HEK293 (cell line): ENCODE measurements at regions of chr20 and their contacts with region 1.

Region 1: GRCh38 chr20:19995220-19995863 is 21.8 kb upstream of the NAA20 start:
- H3K4me3 ChIP-seq: no peak overlapping the region
- H3K27ac ChIP-seq: no peak overlapping the region
- H3K4me1 ChIP-seq: peaks cover 13% of the 10 kb centered on the region
- CTCF ChIP-seq: no peak

Region 2: DNA sequence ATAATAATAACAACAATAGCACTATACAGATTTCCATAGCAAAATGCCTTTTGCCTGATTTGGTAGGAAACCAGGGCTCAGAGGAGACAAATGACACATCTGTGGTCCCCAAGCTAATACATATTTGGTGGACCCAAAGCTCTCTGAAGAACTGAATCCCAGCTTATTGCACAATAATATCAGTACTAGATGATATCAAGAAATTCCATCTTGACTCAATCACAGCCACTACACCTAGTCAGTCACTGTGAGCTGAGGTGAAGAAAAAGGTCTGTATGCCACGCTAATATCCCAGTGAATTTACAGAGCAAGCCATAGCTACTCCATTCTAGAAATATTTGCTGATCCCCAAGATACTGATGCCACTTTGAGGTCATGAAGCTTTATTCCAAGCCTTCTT is 507.9 kb before region 1 on chr20:
- CTCF ChIA-PET with region 1: no interaction called
- POLR2A ChIA-PET with region 1: no interaction called
- H3K4me3 ChIP-seq: no peak overlapping the region
- H3K27ac ChIP-seq: no peak overlapping the region
- H3K4me1 ChIP-seq: no peaks in the 10 kb centered on the region
- CTCF ChIP-seq: no peak

Region 3: GRCh38 chr20:19784511-19785172 is 210.7 kb before region 1 on chr20:
- CTCF ChIA-PET with region 1: interaction called, 25 read pairs
- POLR2A ChIA-PET with region 1: no interaction called
- H3K4me3 ChIP-seq: peak overlapping the region; percentile 21
- H3K27ac ChIP-seq: no peak overlapping the region
- H3K4me1 ChIP-seq: peaks cover 6% of the 10 kb centered on the region; the same call in 1 of the 2 replicates
- CTCF ChIP-seq: 0 out of 2 replicates have a peak, but pooled peaks have one; percentile 60

Region 4: DNA sequence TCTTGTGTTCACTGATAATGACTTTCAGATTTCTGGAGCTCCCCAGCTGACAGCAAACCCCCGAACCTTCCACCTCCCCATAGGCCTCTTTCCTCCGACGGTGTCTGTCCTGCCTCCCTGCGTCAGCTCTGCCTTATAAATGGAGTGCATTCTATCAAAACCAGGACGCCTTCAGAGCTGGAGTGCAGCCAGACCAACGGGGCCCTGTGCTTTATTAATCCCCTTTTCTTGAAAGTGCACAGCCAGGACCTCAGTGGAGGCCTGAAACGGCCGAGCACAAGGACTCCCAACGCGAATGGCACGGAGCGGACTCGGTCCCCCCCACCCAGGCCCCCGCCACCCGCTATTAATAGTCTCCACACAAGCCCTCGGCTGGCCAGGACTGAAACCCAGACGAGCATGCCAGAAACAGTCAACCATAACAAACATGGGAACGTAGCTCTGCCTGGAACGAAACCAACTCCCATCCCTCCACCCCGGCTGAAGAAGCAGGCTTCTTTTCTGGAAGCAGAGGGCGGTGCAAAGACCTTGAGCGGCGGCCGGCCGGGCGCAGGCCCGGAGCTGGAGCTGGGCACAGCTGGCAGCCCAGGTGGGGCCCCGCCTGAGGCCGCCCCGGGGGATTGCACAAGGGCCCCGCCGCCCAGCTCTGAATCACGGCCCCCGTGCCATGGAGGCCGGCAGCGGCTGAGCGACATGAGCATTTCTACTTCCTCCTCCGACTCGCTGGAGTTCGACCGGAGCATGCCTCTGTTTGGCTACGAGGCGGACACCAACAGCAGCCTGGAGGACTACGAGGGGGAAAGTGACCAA is 20.5 kb before region 1 on chr20:
- CTCF ChIA-PET with region 1: interaction called, 40 read pairs
- POLR2A ChIA-PET with region 1: interaction called, 15 read pairs
- H3K4me3 ChIP-seq: no peak overlapping the region
- H3K27ac ChIP-seq: no peak overlapping the region
- H3K4me1 ChIP-seq: peaks cover 8% of the 10 kb centered on the region
- CTCF ChIP-seq: no peak

Region 5: GRCh38 chr20:20017001-20017843 is 21.9 kb after region 1 on chr20 and contains the start of gene NAA20:
- CTCF ChIA-PET with region 1: interaction called, 11 read pairs
- POLR2A ChIA-PET with region 1: interaction called, 5 read pairs
- H3K4me3 ChIP-seq: peak within 1 kb of the TSS; percentile 91
- H3K27ac ChIP-seq: peak within 1 kb of the TSS; percentile 61
- H3K4me1 ChIP-seq: peaks cover 4% of the 10 kb centered on the region; the same call in 1 of the 2 replicates
- CTCF ChIP-seq: peak; percentile 91